ENCODE measurements at regions of chr7 and their contacts with region 1.

Region 1: DNA sequence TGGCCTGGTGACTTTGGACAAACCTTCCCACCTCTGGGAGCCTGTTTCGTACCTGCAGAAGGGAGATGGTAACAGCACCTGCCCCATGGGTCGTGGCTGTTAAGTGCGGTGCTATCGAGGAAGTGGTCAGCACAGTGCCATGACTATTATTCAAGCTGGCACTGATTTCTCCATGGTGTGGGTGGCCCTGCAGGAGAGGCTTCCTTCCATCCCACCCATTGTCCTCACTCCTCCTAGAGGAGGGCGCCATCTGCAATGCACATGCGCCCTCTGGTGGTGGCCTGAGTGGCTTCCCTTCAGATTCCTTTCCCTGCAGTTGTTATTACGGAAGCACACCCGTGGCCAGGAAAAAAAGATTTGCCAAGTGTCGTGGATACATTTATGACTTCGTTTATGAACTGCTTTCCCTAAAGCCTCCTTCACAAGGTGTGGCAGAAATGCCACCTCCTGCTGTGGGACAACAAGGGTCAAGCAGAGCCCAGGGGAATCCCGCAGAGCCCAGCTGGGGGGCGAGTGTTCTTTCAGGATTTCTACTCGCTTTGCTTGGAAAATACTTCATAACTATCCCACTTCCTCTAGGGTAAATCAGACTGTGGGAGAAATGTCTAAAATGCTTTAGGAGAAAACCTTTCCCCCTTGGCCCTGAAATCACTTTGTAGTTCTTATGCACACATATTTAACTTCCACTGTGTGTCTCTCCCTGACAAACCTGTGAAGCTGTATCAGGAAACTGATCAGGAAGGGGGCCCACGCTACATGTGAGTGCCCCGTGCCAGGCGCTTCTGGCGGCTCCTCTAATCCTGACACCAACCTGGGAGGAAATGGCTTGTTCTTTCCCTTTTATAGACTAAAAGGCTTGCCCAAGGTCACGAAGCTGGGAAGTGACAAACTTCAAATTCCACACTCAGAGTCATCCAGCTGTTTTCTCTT is 98.0 kb upstream of the ANLN start:
- DNase-seq: peak; percentile 15
- H3K4me3 ChIP-seq: peak overlapping the region in 3 of 4 donors; percentile 18 to 64 (median 30)
- H3K27ac ChIP-seq: peak overlapping the region; percentile 36 to 93 (median 83)
- H3K4me1 ChIP-seq: peaks cover 6 to 46% (median 24%) of the 10 kb centered on the region in 3 donors
- H3K27me3 ChIP-seq: no peaks in the 10 kb centered on the region
- CTCF ChIP-seq: peak; percentile 91 to 98 (median 98)
- POLR2A ChIP-seq: no peak

Region 2: DNA sequence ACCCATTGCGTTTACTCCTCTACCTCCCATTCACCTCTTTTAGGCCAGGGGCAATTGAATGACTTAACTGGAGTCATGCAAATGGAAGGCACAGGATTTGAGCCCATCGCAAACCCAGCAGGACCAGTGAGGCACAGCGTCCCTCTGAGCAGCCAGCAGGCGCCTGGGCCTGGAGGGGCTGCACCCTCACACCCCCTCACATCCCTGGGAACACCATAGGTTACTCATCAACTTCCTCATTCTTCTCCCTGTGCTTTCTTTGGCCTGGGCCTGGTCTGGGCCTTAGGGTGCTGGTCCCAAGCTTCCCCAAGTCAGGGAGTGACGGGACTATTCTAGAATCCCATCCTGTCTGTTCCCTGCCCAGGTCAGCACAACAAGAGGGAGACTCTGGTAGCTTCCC is 308.0 kb before region 1 on chr7:
- intact Hi-C with region 1: loop called (anchors 5 kb)
- DNase-seq: no peak
- H3K4me3 ChIP-seq: no peak overlapping the region
- H3K27ac ChIP-seq: no peak overlapping the region
- H3K4me1 ChIP-seq: no peaks in the 10 kb centered on the region
- H3K27me3 ChIP-seq: no peaks in the 10 kb centered on the region
- CTCF ChIP-seq: no peak
- POLR2A ChIP-seq: no peak

Region 3: DNA sequence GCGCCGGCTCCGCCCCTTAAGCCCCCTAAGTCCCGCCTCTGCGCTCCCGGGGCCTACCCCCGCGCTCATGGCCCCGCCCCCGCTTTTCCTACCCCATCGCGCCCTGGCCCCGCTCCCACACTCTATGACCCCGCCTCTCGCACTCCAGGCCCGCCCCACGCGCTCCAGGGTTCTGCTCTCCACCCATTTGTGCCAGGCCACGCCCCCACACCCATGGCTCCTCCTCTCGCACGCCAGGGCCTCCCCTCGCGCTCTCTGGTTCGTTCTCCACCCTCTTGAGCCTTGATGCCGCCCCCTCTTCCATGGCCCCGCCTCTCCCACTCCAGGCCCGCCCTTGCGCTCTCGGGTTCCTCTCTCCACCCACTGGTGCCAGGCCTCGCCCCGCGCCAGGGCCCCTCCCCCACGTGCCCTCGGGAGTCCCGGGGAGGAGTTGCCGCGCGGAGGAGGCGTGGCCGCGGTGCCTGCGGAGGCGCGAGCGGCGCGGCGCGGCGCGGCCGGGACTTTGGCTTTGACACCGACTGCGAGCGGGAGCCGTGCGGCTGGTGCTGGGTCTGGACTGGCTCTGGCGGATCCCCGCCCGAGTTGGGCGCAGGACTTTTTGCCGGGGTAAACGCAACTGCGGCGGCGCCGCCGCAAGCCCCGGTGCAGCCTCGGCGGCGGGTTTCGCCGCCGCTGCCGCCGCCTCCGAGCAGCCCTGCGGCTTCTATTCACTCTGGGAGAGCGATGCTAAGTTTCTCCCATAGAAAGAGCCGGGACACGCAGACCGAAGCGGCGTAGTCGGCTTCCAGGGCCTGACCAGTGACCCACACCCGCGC is 138.7 kb before region 1 on chr7 and contains the start of gene EEPD1:
- intact Hi-C with region 1: no loop called
- DNase-seq: peak; percentile 97
- H3K4me3 ChIP-seq: peak within 1 kb of the TSS; percentile 61 to 89 (median 76)
- H3K27ac ChIP-seq: peak within 1 kb of the TSS; percentile 83 to 91 (median 88)
- H3K4me1 ChIP-seq: peaks cover 38 to 56% (median 40%) of the 10 kb centered on the region in 3 donors
- H3K27me3 ChIP-seq: no peaks in the 10 kb centered on the region
- CTCF ChIP-seq: no peak
- POLR2A ChIP-seq: peak in 3 of 4 donors; percentile 34 to 86 (median 82)
- total RNA-seq, gene EEPD1: 2.3 to 10.2 (median 4.8) TPM